Right ventricle myocardium inferior (tissue), 1 donor: ENCODE measurements at regions of chr19 and their contacts with region 1.

Region 1: GRCh38 chr19:41872775-41873647 is 4.1 kb upstream of the CD79A start:
- DNase-seq: peak; percentile 92
- ATAC-seq: peak; percentile 67

Region 2: GRCh38 chr19:41934849-41935374 is 61.9 kb after region 1 on chr19:
- intact Hi-C with region 1: loop called (anchors 5 kb)
- DNase-seq: peak; percentile 82
- ATAC-seq: peak; percentile 70

Region 3: DNA sequence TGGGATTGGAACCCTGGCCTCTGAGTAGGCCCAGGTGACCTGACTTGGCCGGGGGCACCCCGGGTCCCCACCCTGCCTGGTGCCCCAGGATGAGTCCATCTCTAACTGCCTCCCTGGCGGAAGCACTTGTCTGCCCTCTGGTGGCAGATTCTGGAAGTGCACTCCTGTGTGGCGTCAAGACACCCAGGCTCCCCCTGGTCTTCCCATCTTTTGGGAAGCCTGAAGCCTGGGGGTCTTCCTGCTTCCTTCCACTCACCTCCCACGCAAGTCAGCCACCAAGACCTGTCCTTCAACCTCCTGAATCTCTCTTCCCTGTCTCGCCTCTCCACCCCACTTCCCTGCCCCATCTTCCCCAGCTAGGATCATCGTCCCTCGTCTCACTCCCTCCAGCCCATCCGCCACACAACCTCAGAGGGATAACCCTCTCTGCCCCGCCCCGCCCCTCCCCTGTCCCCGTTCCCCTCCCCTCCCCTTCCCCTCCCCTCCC is 78.7 kb after region 1 on chr19:
- intact Hi-C with region 1: loop called (anchors 2 kb)
- DNase-seq: peak; percentile 79
- ATAC-seq: peak; percentile 56